PC-9 (cell line): ENCODE measurements at regions of chr6 and their contacts with region 1.

Region 1: DNA sequence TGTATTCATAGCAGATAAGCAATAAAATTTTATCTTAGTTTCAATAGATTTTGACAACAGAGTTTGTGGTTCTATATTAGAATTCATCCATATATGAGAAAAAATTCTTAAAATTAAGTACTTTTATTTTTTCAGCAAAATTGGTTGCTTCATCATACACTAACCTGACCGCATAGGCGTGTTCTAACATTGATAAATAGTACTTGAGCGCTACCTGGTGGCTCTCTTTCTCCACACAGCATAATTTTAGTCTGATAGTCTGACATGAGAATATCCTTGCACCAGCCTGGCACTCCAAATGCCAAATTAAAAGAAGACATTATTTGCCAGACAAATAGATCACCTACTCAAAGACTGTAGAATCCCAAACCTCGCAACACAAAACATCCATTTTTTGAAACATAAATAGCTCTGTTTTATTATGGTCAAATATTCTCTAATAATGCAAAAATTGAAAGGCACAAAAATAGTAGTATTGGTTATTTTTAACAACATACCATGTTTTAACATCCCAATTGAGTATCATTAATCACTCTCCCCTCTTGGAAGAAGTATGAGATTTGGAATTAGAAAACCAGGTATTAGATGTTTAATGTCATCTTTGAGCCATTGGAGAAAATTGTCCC is 33.0 kb upstream of the FILIP1 start:
- DNase-seq: peak; percentile 50 to 67
- H3K4me3 ChIP-seq: no peak overlapping the region
- H3K27ac ChIP-seq: no peak overlapping the region
- H3K4me1 ChIP-seq: peaks cover 12% of the 10 kb centered on the region
- H3K27me3 ChIP-seq: no peaks in the 10 kb centered on the region
- CTCF ChIP-seq: peak; percentile 83

Region 2: DNA sequence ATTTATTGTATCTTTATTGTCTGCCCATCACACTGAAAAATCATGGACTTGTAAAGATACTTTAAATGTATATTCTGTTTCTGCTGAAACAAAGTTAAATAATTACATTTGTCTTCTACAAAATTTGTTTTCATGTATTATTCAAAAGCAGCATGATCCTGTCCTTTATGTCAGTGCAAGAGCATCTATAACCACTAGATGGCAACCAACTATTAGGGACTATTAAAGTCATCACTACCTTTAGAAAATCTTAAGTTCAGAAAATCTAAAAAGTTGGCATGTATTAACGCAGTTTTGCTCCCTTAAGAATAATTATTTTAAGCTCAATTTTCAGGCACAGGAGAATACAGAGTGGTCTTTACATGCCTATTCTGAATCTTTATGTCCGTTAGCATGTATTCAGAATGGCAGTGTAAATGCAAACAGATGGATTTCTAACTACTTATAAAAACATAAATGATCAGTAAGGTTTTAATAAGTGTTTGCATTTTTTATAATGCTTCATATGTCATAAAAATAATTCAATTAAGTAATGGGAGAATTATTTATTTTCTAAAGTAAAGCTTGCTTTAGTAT is 259.8 kb before region 1 on chr6:
- CTCF ChIA-PET with region 1: interaction called, 3 read pairs
- POLR2A ChIA-PET with region 1: no interaction called
- intact Hi-C with region 1: loop called (anchors 1 kb)
- DNase-seq: peak in 1 of 2 experiments; percentile 39
- H3K4me3 ChIP-seq: no peak overlapping the region
- H3K27ac ChIP-seq: no peak overlapping the region
- H3K4me1 ChIP-seq: peaks cover 7% of the 10 kb centered on the region; the same call in 1 of the 2 replicates
- H3K27me3 ChIP-seq: no peaks in the 10 kb centered on the region
- CTCF ChIP-seq: peak; percentile 84

Region 3: DNA sequence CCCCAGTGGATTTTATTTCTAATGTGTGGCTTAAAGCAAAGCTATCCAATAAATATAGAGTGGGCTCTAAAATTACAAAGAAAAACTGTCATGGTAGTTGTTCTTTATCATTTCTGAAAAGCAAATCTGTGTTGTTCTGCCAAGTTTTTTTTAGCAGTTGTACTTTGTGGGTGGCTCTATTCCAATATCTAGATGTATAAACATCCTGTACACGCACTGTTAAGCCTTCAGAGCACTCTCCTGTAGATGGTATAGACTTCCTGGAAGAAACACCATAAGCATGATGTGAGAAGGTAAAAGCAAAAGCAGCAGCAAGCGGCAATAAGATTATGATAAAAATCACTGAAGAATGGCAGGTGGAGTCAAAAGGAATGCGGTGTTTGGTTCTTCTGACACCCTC is 220.6 kb before region 1 on chr6:
- CTCF ChIA-PET with region 1: interaction called, 13 read pairs
- POLR2A ChIA-PET with region 1: no interaction called
- intact Hi-C with region 1: no loop called
- DNase-seq: no peak
- H3K4me3 ChIP-seq: no peak overlapping the region
- H3K27ac ChIP-seq: no peak overlapping the region
- H3K4me1 ChIP-seq: no peaks in the 10 kb centered on the region
- H3K27me3 ChIP-seq: no peaks in the 10 kb centered on the region
- CTCF ChIP-seq: no peak

Region 4: DNA sequence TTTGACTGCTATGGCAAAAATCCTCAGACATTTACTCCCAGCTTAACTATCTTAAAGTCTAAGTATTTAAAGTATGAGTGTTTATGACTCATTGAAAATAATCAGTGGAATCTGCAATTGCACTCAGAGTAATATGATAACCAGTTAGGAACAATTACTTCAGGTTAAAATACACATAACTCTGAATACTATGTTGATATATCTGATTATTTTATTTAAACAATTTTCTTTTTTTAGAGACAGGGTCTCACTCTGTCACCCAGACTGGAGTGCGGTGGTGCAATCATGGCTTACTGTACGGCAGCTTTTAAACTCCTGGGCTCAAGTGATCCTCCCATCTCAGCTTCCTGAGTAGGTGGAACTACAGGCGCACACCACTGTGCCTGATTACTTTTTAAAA is 76.9 kb before region 1 on chr6:
- CTCF ChIA-PET with region 1: no interaction called
- POLR2A ChIA-PET with region 1: no interaction called
- intact Hi-C with region 1: loop called (anchors 2 kb)
- DNase-seq: peak; percentile 40 to 54
- H3K4me3 ChIP-seq: no peak overlapping the region
- H3K27ac ChIP-seq: no peak overlapping the region
- H3K4me1 ChIP-seq: no peaks in the 10 kb centered on the region
- H3K27me3 ChIP-seq: no peaks in the 10 kb centered on the region
- CTCF ChIP-seq: no peak

Region 5: GRCh38 chr6:75504465-75505228 is 22.0 kb before region 1 on chr6:
- CTCF ChIA-PET with region 1: no interaction called
- POLR2A ChIA-PET with region 1: no interaction called
- intact Hi-C with region 1: no loop called
- DNase-seq: no peak
- H3K4me3 ChIP-seq: no peak overlapping the region
- H3K27ac ChIP-seq: no peak overlapping the region
- H3K4me1 ChIP-seq: no peaks in the 10 kb centered on the region
- H3K27me3 ChIP-seq: no peaks in the 10 kb centered on the region
- CTCF ChIP-seq: no peak

Region 6: DNA sequence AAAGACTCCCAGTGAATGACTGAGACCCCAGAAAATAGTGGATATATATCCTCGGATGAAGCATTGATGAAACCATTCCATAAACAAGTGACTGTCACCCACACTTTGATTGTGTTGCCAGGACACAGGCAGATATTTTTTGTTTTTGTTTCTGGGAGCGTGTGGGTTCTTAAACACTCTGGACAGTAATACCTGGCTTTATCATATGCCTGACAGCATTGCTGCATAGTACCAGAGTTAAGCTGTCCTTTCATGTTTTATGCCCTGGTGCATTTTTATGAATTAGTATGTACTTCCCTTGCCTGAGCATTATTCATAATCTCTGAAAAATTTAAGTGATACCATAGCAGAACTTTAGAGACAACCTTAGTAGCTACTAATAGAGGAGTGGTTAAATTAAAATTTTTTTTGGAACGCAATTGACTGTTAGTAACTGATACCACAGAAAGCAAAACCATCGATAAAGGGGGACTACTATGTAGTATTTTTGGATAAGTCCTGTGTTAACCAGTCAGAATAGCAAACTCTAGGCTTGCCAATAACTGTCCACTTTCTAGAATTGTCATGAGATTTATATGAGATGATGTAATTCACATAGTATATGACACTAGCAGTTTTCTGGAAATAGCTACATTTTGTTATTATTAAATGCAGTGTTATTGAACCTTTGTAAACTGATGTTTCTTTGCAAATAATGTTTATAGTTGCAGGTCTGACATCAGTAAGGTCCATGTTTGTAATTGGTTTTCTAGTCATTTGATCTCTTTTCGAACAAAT is 105.4 kb after region 1 on chr6:
- CTCF ChIA-PET with region 1: no interaction called
- POLR2A ChIA-PET with region 1: no interaction called
- intact Hi-C with region 1: no loop called
- DNase-seq: no peak
- H3K4me3 ChIP-seq: no peak overlapping the region
- H3K27ac ChIP-seq: peak overlapping the region; percentile 9; the same call in 1 of the 2 replicates
- H3K4me1 ChIP-seq: no peaks in the 10 kb centered on the region
- H3K27me3 ChIP-seq: no peaks in the 10 kb centered on the region
- CTCF ChIP-seq: no peak